Aorta (tissue), 5 donors: ENCODE measurements at regions of chrX and their contacts with region 1.

Region 1: GRCh38 chrX:133415276-133416105 is at the start of gene GPC4:
- DNase-seq: peak; percentile 73 to 89
- ATAC-seq: peak; percentile 79
- H3K4me3 ChIP-seq: peak within 1 kb of the TSS; percentile 42 to 71
- H3K27ac ChIP-seq: peak within 1 kb of the TSS in 1 of 2 donors; percentile 50
- H3K4me1 ChIP-seq: no peaks in the 10 kb centered on the region
- H3K27me3 ChIP-seq: no peaks in the 10 kb centered on the region
- total RNA-seq, gene GPC4: 23.1 to 32.7 TPM

Region 2: DNA sequence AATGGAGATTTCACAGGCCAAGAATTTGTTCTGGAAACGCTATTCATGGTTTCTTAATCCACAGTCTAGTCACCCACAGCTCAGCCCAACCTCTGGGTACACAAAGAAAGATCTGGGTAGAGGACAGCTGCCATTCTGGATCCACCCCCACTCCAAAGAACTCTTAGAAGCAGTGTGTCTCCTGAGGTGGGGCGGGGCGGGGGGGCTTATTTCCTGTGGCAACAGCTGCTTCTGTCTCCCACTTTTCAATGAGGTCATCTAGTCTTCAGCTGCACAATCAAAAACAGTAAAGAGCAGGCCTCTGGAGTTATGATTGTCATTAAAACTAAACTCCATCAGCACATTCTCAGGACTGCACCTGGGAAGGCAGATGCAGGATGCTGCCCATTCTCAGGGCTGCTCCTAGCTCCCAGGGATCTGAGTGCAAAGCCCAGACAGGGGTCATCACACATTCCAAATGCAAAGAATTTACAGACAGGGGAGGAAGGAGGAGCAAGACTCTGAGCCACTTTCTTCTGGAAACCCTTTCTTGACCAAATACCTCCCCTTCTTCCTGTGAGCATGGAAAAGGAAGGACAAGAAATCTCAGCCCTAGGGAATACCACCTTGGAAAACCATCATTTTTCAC is 664.3 kb before region 1 on chrX:
- intact Hi-C with region 1: no loop called
- DNase-seq: no peak
- ATAC-seq: no peak
- H3K4me3 ChIP-seq: no peak overlapping the region
- H3K27ac ChIP-seq: no peak overlapping the region
- H3K4me1 ChIP-seq: no peaks in the 10 kb centered on the region
- H3K27me3 ChIP-seq: no peaks in the 10 kb centered on the region

Region 3: GRCh38 chrX:133335027-133335426 is 80.5 kb before region 1 on chrX:
- intact Hi-C with region 1: loop called in 1 of 2 experiments (anchors 5 kb)
- DNase-seq: no peak
- ATAC-seq: no peak
- H3K4me3 ChIP-seq: no peak overlapping the region
- H3K27ac ChIP-seq: no peak overlapping the region
- H3K4me1 ChIP-seq: peaks cover 1 to 2% of the 10 kb centered on the region in 2 donors
- H3K27me3 ChIP-seq: no peaks in the 10 kb centered on the region

Region 4: GRCh38 chrX:133563705-133564104 is 148.2 kb after region 1 on chrX:
- intact Hi-C with region 1: loop called in 1 of 2 experiments (anchors 10 kb)
- DNase-seq: no peak
- ATAC-seq: peak; percentile 57
- H3K4me3 ChIP-seq: no peak overlapping the region
- H3K27ac ChIP-seq: peak overlapping the region in 1 of 2 donors; percentile 35
- H3K4me1 ChIP-seq: no peaks in the 10 kb centered on the region
- H3K27me3 ChIP-seq: no peaks in the 10 kb centered on the region

Region 5: GRCh38 chrX:133655275-133656265 is 240.1 kb after region 1 on chrX:
- intact Hi-C with region 1: loop called in 1 of 2 experiments (anchors 10 kb)
- DNase-seq: no peak
- ATAC-seq: no peak
- H3K4me3 ChIP-seq: no peak overlapping the region
- H3K27ac ChIP-seq: no peak overlapping the region
- H3K4me1 ChIP-seq: no peaks in the 10 kb centered on the region
- H3K27me3 ChIP-seq: no peaks in the 10 kb centered on the region

Region 6: GRCh38 chrX:133897593-133898163 is 482.2 kb after region 1 on chrX:
- intact Hi-C with region 1: no loop called
- DNase-seq: no peak
- ATAC-seq: no peak
- H3K4me3 ChIP-seq: no peak overlapping the region
- H3K27ac ChIP-seq: no peak overlapping the region
- H3K4me1 ChIP-seq: no peaks in the 10 kb centered on the region
- H3K27me3 ChIP-seq: no peaks in the 10 kb centered on the region